ENCODE measurements at regions of chr1 and their contacts with region 1.

Region 1: GRCh38 chr1:28518000-28518744 is 12.3 kb downstream of the RCC1 start:
- DNase-seq: no peak
- ATAC-seq: peak; percentile 72
- H3K4me3 ChIP-seq: peak overlapping the region; percentile 80
- H3K27ac ChIP-seq: peak overlapping the region; percentile 84
- H3K4me1 ChIP-seq: peaks cover 18% of the 10 kb centered on the region
- H3K27me3 ChIP-seq: no peaks in the 10 kb centered on the region
- CTCF ChIP-seq: peak; percentile 94 to 99 (median 97); a peak in 5 of 6 replicates
- EP300 ChIP-seq: no peak
- POLR2A ChIP-seq: peak; percentile 89
- RAD21 ChIP-seq: peak; percentile 89

Region 2: DNA sequence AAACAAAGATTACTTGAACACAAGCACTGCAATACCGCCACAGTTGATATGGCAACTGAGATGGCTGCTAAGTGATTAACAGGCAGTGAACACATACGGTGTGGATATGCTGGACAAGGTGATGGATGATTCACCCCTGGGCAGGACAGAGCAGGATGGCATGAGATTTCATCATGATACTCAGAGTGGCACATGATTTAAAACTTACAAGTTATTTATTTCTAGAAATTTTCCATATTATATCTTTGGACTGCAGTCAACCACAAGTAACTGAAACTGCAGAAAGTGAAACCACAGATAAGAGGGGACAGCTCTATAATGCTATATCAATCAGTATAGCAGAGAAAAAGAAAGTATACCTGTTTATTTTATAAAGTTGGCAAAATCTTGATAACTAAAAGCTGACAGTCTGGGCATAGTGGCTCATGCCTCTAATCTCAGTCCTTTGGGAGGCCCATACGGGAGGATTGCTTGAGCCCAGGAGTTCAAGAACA is 100.7 kb before region 1 on chr1:
- CTCF ChIA-PET with region 1: interaction called, 4 read pairs
- POLR2A ChIA-PET with region 1: interaction called, 8 read pairs
- RAD21 ChIA-PET with region 1: interaction called, 5 read pairs
- SMC1A ChIA-PET with region 1: interaction called, 4 read pairs
- in situ Hi-C with region 1: no loop called
- intact Hi-C with region 1: loop called (anchors 5 kb)
- DNase-seq: no peak
- ATAC-seq: peak; percentile 94
- H3K4me3 ChIP-seq: peak overlapping the region; percentile 48; the same call in 1 of the 2 replicates
- H3K27ac ChIP-seq: peak overlapping the region; percentile 50; the same call in 1 of the 2 replicates
- H3K4me1 ChIP-seq: peaks cover 7% of the 10 kb centered on the region
- H3K27me3 ChIP-seq: no peaks in the 10 kb centered on the region
- CTCF ChIP-seq: no peak
- EP300 ChIP-seq: no peak
- POLR2A ChIP-seq: no peak
- RAD21 ChIP-seq: no peak

Region 3: DNA sequence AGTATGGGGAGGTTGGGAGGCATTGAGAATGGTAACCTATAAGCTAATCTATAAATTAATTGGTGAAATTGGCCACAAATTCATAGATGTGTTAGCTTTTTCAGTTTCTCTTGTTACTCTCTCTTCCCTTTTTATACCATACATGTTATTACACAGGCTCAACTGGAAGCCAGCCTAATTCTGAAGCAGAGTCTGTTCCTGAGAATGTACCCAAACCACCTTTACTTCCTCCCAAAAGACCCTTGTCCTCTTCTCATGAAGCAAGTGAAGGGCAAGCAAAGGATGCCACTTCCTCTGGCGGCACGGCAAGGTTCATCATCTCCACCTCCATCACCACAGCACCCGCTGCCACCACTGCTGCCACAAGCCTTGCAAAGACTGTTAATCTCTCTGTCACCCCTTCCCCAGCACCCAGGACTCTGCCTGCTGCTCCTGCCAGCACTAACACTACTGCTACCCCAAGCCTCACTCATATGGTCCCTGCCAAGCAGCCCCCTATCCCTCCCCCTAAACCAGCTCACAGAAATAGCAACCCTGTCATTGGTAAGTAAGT is 51.9 kb before region 1 on chr1:
- CTCF ChIA-PET with region 1: no interaction called
- POLR2A ChIA-PET with region 1: no interaction called
- RAD21 ChIA-PET with region 1: no interaction called
- SMC1A ChIA-PET with region 1: no interaction called
- in situ Hi-C with region 1: no loop called
- intact Hi-C with region 1: no loop called
- DNase-seq: no peak
- ATAC-seq: no peak
- H3K4me3 ChIP-seq: no peak overlapping the region
- H3K27ac ChIP-seq: no peak overlapping the region
- H3K4me1 ChIP-seq: no peaks in the 10 kb centered on the region
- H3K27me3 ChIP-seq: no peaks in the 10 kb centered on the region
- CTCF ChIP-seq: no peak
- EP300 ChIP-seq: no peak
- POLR2A ChIP-seq: no peak
- RAD21 ChIP-seq: no peak

Region 4: GRCh38 chr1:28552758-28553663 is 34.8 kb after region 1 on chr1 and contains the start of gene TRNAU1AP:
- CTCF ChIA-PET with region 1: interaction called, 4 read pairs
- POLR2A ChIA-PET with region 1: interaction called, 4 read pairs
- RAD21 ChIA-PET with region 1: interaction called, 4 read pairs
- SMC1A ChIA-PET with region 1: interaction called, 5 read pairs
- in situ Hi-C with region 1: no loop called
- intact Hi-C with region 1: loop called (anchors 2 kb)
- DNase-seq: peak; percentile 91
- ATAC-seq: peak; percentile 95
- H3K4me3 ChIP-seq: peak within 1 kb of the TSS; percentile 87
- H3K27ac ChIP-seq: peak within 1 kb of the TSS; percentile 86
- H3K4me1 ChIP-seq: no peaks in the 10 kb centered on the region; the same call in none of the 2 replicates
- H3K27me3 ChIP-seq: no peaks in the 10 kb centered on the region
- CTCF ChIP-seq: no peak
- EP300 ChIP-seq: peak in 1 of 2 experiments; percentile 68; a peak in 1 of 4 replicates
- POLR2A ChIP-seq: peak; percentile 90
- RAD21 ChIP-seq: no peak
- polyA plus RNA-seq, gene TRNAU1AP: 53.1 to 53.8 TPM

Region 5: GRCh38 chr1:28642847-28643635 is 124.9 kb after region 1 on chr1 and contains the start of gene TAF12:
- CTCF ChIA-PET with region 1: no interaction called
- POLR2A ChIA-PET with region 1: no interaction called
- RAD21 ChIA-PET with region 1: interaction called, 4 read pairs
- SMC1A ChIA-PET with region 1: interaction called, 3 read pairs
- in situ Hi-C with region 1: no loop called
- intact Hi-C with region 1: loop called (anchors 5 kb)
- DNase-seq: peak; percentile 93
- ATAC-seq: peak; percentile 90
- H3K4me3 ChIP-seq: peak within 1 kb of the TSS; percentile 92
- H3K27ac ChIP-seq: peak within 1 kb of the TSS; percentile 90
- H3K4me1 ChIP-seq: peaks cover 13% of the 10 kb centered on the region
- H3K27me3 ChIP-seq: no peaks in the 10 kb centered on the region
- CTCF ChIP-seq: peak; percentile 32 to 73 (median 42); a peak in 4 of 6 replicates
- EP300 ChIP-seq: 0 out of 4 replicates have a peak, but pooled peaks of 1 of the 2 experiments have one; percentile 31
- POLR2A ChIP-seq: peak; percentile 99
- RAD21 ChIP-seq: peak; percentile 49
- polyA plus RNA-seq, gene TAF12: 34.3 to 41.9 TPM